CD4-positive, alpha-beta memory T cell (primary cell): ENCODE measurements at regions of chr14 and their contacts with region 1.

Region 1: GRCh38 chr14:67704484-67705089 is 2.9 kb downstream of the RDH12 start:
- DNase-seq: peak in 4 of 5 donors; percentile 50 to 57 (median 52)
- H3K4me3 ChIP-seq: no peak overlapping the region
- H3K4me3 Mint-ChIP-seq: no peak overlapping the region
- H3K27ac ChIP-seq: no peak overlapping the region
- H3K27ac Mint-ChIP-seq: no peak overlapping the region
- H3K4me1 ChIP-seq: no peaks in the 10 kb centered on the region
- H3K4me1 Mint-ChIP-seq: no peaks in the 10 kb centered on the region
- H3K27me3 ChIP-seq: no peaks in the 10 kb centered on the region
- H3K27me3 Mint-ChIP-seq: peaks cover 3 to 4% of the 10 kb centered on the region in 2 donors

Region 2: GRCh38 chr14:66359500-66359899 is 1345.1 kb before region 1 on chr14:
- CTCF ChIA-PET with region 1: interaction called, 6 read pairs
- POLR2A ChIA-PET with region 1: no interaction called
- intact Hi-C with region 1: loop called (anchors 10 kb)
- DNase-seq: peak in 4 of 5 donors; percentile 33 to 52 (median 49)
- H3K4me3 ChIP-seq: no peak overlapping the region
- H3K4me3 Mint-ChIP-seq: no peak overlapping the region
- H3K27ac ChIP-seq: no peak overlapping the region
- H3K27ac Mint-ChIP-seq: no peak overlapping the region
- H3K4me1 ChIP-seq: no peaks in the 10 kb centered on the region
- H3K4me1 Mint-ChIP-seq: no peaks in the 10 kb centered on the region
- H3K27me3 ChIP-seq: no peaks in the 10 kb centered on the region
- H3K27me3 Mint-ChIP-seq: peaks cover 3 to 7% of the 10 kb centered on the region in 2 donors

Region 3: GRCh38 chr14:67526676-67527459 is 177.7 kb before region 1 on chr14:
- CTCF ChIA-PET with region 1: interaction called, 51 read pairs
- POLR2A ChIA-PET with region 1: no interaction called
- intact Hi-C with region 1: loop called (anchors 1 kb)
- DNase-seq: peak; percentile 30 to 47 (median 31)
- H3K4me3 ChIP-seq: no peak overlapping the region
- H3K4me3 Mint-ChIP-seq: no peak overlapping the region
- H3K27ac ChIP-seq: no peak overlapping the region
- H3K27ac Mint-ChIP-seq: no peak overlapping the region
- H3K4me1 ChIP-seq: no peaks in the 10 kb centered on the region
- H3K4me1 Mint-ChIP-seq: peaks cover 2 to 9% (median 5%) of the 10 kb centered on the region in 4 donors
- H3K27me3 ChIP-seq: peaks cover 15% of the 10 kb centered on the region
- H3K27me3 Mint-ChIP-seq: peaks cover 13 to 44% of the 10 kb centered on the region in 2 donors

Region 4: DNA sequence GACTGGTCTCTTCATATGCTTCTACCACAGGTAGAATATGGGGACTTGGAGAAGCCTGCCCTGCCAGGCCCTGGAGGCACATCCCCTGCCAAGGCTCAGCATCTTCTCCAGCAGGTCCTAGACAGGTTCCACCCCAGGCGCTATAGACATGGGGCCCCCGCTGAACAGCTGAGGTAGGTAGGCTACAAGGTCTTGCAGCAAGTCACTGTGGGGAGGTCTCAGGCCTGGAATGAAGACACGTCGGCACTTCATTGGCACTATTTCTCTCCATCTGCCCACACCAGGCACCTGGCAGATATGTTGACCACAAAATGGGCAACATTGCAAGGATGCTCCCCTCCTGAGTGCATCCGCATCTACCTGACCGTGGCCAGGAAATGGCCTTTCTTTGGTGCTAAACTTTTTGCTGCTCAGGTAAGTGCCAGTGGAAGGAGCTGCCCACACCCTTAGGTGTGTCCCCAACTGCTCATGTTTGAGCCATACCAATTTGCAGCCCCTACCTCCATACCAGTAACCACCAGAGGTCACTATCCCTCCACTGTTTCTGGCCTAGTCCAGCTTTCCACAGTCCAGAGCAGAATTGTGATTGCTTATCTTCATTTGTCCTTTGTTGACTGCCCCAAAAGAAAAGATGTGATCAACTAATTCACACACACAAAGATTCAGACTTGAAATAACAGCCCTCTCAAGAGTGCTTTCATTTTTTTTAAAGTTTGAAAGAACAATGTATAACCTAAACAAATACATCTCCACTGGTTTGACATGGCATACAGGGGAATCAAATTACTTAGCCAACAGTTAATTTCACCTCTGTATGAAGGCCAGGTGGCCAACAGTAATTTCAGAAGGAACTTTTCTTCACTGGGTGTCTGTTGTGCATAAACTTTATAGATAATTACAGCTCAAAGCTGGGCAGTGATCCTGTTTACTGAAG is 120.6 kb before region 1 on chr14:
- CTCF ChIA-PET with region 1: interaction called, 139 read pairs
- POLR2A ChIA-PET with region 1: no interaction called
- intact Hi-C with region 1: loop called (anchors 1 kb)
- DNase-seq: peak in 4 of 5 donors; percentile 14 to 34 (median 30)
- H3K4me3 ChIP-seq: no peak overlapping the region
- H3K4me3 Mint-ChIP-seq: no peak overlapping the region
- H3K27ac ChIP-seq: no peak overlapping the region
- H3K27ac Mint-ChIP-seq: no peak overlapping the region
- H3K4me1 ChIP-seq: no peaks in the 10 kb centered on the region
- H3K4me1 Mint-ChIP-seq: no peaks in the 10 kb centered on the region
- H3K27me3 ChIP-seq: no peaks in the 10 kb centered on the region
- H3K27me3 Mint-ChIP-seq: no peaks in the 10 kb centered on the region

Region 5: DNA sequence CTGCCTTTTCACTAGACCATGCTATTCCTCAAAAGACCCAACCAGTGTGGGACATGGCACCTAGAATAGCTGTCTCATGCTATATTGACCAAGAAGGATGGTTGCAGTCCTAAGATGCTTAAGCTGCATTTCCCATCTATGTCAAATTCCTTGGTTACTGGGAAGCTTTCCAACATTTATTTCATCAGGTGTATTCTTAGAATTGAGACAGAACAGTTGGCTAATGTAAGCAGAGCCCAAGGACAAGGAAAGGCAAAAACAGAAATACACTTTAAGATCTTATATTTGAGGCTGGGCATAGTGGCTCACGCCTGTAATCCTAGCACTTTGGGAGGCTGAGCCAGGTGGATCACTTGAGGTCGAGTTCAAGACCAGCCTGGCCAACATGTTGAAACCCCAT is 60.2 kb before region 1 on chr14:
- CTCF ChIA-PET with region 1: interaction called, 10 read pairs
- POLR2A ChIA-PET with region 1: no interaction called
- intact Hi-C with region 1: no loop called
- DNase-seq: no peak
- H3K4me3 ChIP-seq: no peak overlapping the region
- H3K4me3 Mint-ChIP-seq: no peak overlapping the region
- H3K27ac ChIP-seq: no peak overlapping the region
- H3K27ac Mint-ChIP-seq: peak overlapping the region in 1 of 7 donors; percentile 76
- H3K4me1 ChIP-seq: no peaks in the 10 kb centered on the region
- H3K4me1 Mint-ChIP-seq: peaks cover 0 to 4% (median 1%) of the 10 kb centered on the region in 4 donors
- H3K27me3 ChIP-seq: no peaks in the 10 kb centered on the region
- H3K27me3 Mint-ChIP-seq: no peaks in the 10 kb centered on the region

Region 6: DNA sequence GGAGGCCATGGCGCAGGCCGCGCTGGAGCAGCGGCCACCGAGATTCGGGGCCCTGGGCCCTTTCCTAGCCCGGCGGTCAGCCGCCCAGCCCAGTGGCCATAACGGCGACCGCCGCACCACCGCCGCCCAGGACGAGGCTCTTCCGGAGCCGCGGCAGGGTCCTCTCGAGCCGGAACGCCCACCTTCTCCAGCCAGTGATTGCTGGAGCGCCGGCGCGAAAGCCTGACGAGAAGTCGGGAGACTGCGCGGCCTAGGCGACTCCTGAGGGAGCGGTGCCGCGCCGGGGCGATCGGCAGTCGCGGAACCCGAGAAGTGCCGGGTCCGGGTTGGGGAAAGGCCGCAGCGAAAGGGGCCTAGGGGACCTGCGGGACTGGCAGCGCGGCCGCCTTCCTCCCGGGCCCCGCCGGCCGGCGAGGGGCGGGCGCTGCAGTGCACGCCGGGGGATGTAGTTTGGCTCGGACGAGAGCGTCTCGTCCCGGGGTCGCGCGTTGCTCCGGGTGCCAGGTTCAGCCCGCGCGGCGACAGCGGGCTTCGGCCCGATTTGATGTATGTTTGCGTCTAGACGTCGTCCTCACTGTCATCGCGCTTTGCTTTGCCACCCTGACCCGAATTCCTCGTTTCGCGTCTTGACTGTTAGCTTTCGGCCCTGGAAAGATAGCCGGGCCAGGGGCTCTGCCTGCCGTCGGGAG is 30.0 kb before region 1 on chr14 and contains the start of gene VTI1B:
- CTCF ChIA-PET with region 1: interaction called, 10 read pairs
- POLR2A ChIA-PET with region 1: interaction called, 4 read pairs
- intact Hi-C with region 1: no loop called
- DNase-seq: peak; percentile 78 to 85 (median 81)
- H3K4me3 ChIP-seq: peak within 1 kb of the TSS; percentile 66 to 96
- H3K4me3 Mint-ChIP-seq: peak within 1 kb of the TSS; percentile 86 to 94 (median 91)
- H3K27ac ChIP-seq: peak within 1 kb of the TSS; percentile 87
- H3K27ac Mint-ChIP-seq: peak within 1 kb of the TSS; percentile 72 to 95 (median 92)
- H3K4me1 ChIP-seq: peaks cover 48% of the 10 kb centered on the region
- H3K4me1 Mint-ChIP-seq: peaks cover 23 to 54% (median 39%) of the 10 kb centered on the region in 4 donors
- H3K27me3 ChIP-seq: no peaks in the 10 kb centered on the region
- H3K27me3 Mint-ChIP-seq: no peaks in the 10 kb centered on the region
- total RNA-seq, gene VTI1B: 71.1 to 72.6 TPM